Activated T-helper 1 cell treated with anti-CD3 and anti-CD28 coated beads, Interleukin-12 subunit alpha, Interleukin-12 subunit beta, Interleukin-2, Interleukin-4 antibody, amounts not matched to agents 30 ng/mL and 10 ng/mL and 1 ng/mL, durations not matched to agents 14 hours and 24 hours and 36 hours (primary cell): ENCODE measurements at regions of chr14 and their contacts with region 1.

Region 1: GRCh38 chr14:93103392-93104080 is 12.2 kb downstream of the ITPK1 start:
- DNase-seq: peak; percentile 77
- H3K4me3 Mint-ChIP-seq: peak overlapping the region; percentile 77
- H3K27ac Mint-ChIP-seq: peak overlapping the region; percentile 93
- H3K4me1 Mint-ChIP-seq: peaks cover 51% of the 10 kb centered on the region
- H3K27me3 Mint-ChIP-seq: no peaks in the 10 kb centered on the region

Region 2: DNA sequence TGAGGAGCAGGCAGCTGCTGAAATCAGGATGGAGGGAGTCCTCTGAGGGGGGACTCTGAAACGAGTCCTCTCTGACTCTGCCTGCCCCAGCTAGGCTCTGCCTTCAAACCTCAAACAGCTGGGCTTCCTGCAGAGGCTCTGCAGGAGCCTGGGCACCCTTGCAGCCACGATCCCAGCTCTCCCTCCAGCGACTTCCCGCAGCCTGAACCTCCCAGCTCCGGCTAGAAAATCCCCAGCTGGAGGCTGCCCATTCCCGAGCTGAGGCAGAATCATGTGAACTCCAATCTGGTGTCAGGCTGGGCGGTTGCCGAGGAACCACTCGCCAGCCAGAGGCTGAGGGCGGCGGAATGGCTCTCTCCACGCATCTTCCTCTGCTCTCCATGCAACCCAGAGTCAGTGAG is 1859.0 kb before region 1 on chr14 and contains the start of gene GPR68:
- intact Hi-C with region 1: no loop called
- DNase-seq: no peak
- H3K4me3 Mint-ChIP-seq: peak within 1 kb of the TSS; percentile 85
- H3K27ac Mint-ChIP-seq: peak within 1 kb of the TSS; percentile 88
- H3K4me1 Mint-ChIP-seq: peaks cover 89% of the 10 kb centered on the region
- H3K27me3 Mint-ChIP-seq: no peaks in the 10 kb centered on the region
- total RNA-seq, gene GPR68: 4.5 and 5.4 TPM in 2 replicates

Region 3: GRCh38 chr14:93137864-93138263 is 34.3 kb after region 1 on chr14:
- intact Hi-C with region 1: loop called (anchors 5 kb)
- DNase-seq: no peak
- H3K4me3 Mint-ChIP-seq: no peak overlapping the region
- H3K27ac Mint-ChIP-seq: no peak overlapping the region
- H3K4me1 Mint-ChIP-seq: peaks cover 5% of the 10 kb centered on the region
- H3K27me3 Mint-ChIP-seq: no peaks in the 10 kb centered on the region